Activated CD8-positive, alpha-beta memory T cell treated with anti-CD3 and anti-CD28 coated beads, Interleukin-2, amount 10 ng/mL, durations not matched to agents 7 days and 5 days (primary cell): ENCODE measurements at regions of chr5 and their contacts with region 1.

Region 1: DNA sequence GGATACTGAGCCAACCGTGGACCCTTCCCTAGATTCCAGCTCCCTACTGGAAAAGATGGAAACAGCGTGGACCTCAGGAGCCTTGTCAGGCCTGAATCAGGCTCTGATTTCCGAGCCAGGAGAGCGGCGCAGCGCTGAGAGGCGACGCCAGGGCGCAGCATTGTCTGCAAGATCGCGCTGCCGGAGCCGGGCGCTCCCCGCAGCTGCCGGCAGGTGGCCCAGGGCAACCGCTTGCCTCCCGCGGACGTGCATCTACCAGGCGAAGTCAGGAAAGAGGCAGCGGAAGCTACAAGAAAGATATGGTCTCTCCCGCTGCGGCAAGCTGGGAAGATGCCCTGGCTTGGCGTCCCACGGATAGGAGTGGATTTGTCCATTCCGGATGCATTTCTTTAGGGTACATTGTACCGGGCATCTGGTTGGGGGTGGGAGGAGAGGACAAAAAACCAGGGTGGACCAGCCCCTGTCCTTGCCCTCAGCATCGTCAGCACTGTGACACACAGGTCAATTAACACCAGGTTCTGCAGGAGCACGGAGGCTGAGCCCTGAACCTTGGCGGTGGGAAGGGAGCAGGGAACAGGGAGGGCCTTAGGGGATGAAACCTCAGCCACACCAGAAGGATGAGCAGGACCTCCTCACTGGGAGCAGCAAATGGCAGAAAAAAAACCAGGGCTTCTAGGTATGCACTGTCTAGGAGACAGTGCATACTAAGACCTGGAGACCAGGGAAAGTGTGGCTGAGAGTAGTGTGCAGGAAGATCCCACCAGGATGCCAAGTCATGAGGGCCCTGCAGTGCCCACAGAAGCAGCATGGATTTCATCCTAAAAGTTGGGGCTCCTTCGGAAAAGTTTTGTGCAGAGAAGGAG is 55.9 kb downstream of the SFXN1 start:
- DNase-seq: peak; percentile 86
- ATAC-seq: peak; percentile 100
- H3K4me3 Mint-ChIP-seq: no peak overlapping the region
- H3K27ac Mint-ChIP-seq: peak overlapping the region; percentile 20
- H3K4me1 Mint-ChIP-seq: peaks cover 28% of the 10 kb centered on the region
- H3K27me3 Mint-ChIP-seq: peaks cover 3% of the 10 kb centered on the region

Region 2: GRCh38 chr5:174910245-174910737 is 624.0 kb before region 1 on chr5:
- CTCF ChIA-PET with region 1: no interaction called
- DNase-seq: peak; percentile 59
- ATAC-seq: peak; percentile 78
- H3K4me3 Mint-ChIP-seq: no peak overlapping the region
- H3K27ac Mint-ChIP-seq: no peak overlapping the region
- H3K4me1 Mint-ChIP-seq: no peaks in the 10 kb centered on the region
- H3K27me3 Mint-ChIP-seq: peaks cover 28% of the 10 kb centered on the region

Region 3: GRCh38 chr5:175436359-175436758 is 97.9 kb before region 1 on chr5:
- CTCF ChIA-PET with region 1: no interaction called
- DNase-seq: no peak
- ATAC-seq: no peak
- H3K4me3 Mint-ChIP-seq: no peak overlapping the region
- H3K27ac Mint-ChIP-seq: no peak overlapping the region
- H3K4me1 Mint-ChIP-seq: no peaks in the 10 kb centered on the region
- H3K27me3 Mint-ChIP-seq: peaks cover 52% of the 10 kb centered on the region

Region 4: DNA sequence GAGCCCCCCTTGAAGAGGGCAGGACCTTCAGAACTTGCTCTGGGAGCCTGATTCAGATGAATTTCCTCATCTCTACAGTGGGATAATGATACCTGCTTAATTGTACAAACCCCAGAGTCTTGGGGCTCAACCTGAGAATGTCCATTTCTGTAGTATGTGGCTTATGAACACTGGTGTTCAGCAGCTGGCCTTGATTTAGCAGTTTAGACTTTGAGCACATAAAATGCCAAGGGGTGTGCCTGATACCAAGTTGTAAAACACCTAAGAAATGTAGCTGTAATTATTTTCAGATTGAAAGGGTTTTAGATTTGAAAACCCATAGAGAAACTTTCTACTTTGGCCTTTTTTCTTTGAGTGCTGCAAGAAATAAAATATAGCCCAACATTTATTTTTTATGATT is 11.0 kb before region 1 on chr5:
- CTCF ChIA-PET with region 1: interaction called, 18 read pairs
- DNase-seq: no peak
- ATAC-seq: no peak
- H3K4me3 Mint-ChIP-seq: peak overlapping the region; percentile 39
- H3K27ac Mint-ChIP-seq: peak overlapping the region; percentile 68
- H3K4me1 Mint-ChIP-seq: peaks cover 66% of the 10 kb centered on the region
- H3K27me3 Mint-ChIP-seq: no peaks in the 10 kb centered on the region

Region 5: GRCh38 chr5:175597718-175598117 is 63.4 kb after region 1 on chr5:
- CTCF ChIA-PET with region 1: no interaction called
- DNase-seq: no peak
- ATAC-seq: no peak
- H3K4me3 Mint-ChIP-seq: no peak overlapping the region
- H3K27ac Mint-ChIP-seq: no peak overlapping the region
- H3K4me1 Mint-ChIP-seq: no peaks in the 10 kb centered on the region
- H3K27me3 Mint-ChIP-seq: peaks cover 19% of the 10 kb centered on the region

Region 6: GRCh38 chr5:175616083-175616482 is 81.8 kb after region 1 on chr5:
- CTCF ChIA-PET with region 1: no interaction called
- DNase-seq: no peak
- ATAC-seq: no peak
- H3K4me3 Mint-ChIP-seq: no peak overlapping the region
- H3K27ac Mint-ChIP-seq: no peak overlapping the region
- H3K4me1 Mint-ChIP-seq: no peaks in the 10 kb centered on the region
- H3K27me3 Mint-ChIP-seq: peaks cover 18% of the 10 kb centered on the region

Region 7: GRCh38 chr5:175657593-175658271 is 123.4 kb after region 1 on chr5 and contains the start of gene HRH2:
- CTCF ChIA-PET with region 1: interaction called, 17 read pairs
- DNase-seq: peak; percentile 65
- ATAC-seq: peak; percentile 46
- H3K4me3 Mint-ChIP-seq: peak within 1 kb of the TSS; percentile 78
- H3K27ac Mint-ChIP-seq: peak within 1 kb of the TSS; percentile 77
- H3K4me1 Mint-ChIP-seq: peaks cover 63% of the 10 kb centered on the region
- H3K27me3 Mint-ChIP-seq: peaks cover 31% of the 10 kb centered on the region
- total RNA-seq, gene HRH2: 6.8 to 21.4 TPM

Region 8: DNA sequence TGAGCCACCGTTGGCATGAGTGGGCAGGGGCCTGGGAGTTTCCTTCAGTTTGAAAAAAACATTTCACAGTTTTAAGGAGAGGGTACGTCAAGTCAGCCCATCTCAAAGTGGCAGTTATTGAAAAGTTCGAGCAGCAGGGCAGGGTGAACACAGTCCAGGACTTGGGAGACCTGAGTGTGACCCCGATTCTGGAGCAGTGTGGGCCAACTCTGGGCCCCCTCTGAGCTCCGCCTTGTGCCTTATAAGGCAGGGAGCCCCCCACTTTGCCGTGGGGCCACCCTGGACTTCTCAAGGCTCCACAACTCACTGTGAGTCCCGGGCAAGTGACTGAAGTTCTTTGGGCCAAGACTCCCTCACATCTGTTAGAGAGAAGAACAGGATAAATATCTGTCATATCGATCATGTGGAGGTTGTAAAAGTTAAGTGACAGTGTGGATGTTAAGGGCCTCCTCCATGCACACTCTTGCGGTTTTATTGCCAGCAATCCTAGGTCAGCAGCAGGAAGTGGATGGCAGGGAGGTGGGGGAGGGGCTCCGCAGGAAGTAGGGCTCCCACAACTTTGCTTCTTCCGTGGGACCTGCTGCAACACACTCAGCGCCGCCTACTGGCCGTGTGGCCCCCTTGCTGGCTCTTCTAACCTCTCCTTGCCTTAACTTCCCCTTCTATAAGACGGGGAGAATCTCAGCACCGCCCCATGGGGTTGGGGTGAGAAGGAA is 162.0 kb after region 1 on chr5:
- CTCF ChIA-PET with region 1: interaction called, 74 read pairs
- DNase-seq: peak; percentile 80
- ATAC-seq: peak; percentile 76
- H3K4me3 Mint-ChIP-seq: no peak overlapping the region
- H3K27ac Mint-ChIP-seq: peak overlapping the region; percentile 66
- H3K4me1 Mint-ChIP-seq: peaks cover 14% of the 10 kb centered on the region
- H3K27me3 Mint-ChIP-seq: no peaks in the 10 kb centered on the region

Region 9: GRCh38 chr5:175729829-175730277 is 195.6 kb after region 1 on chr5:
- CTCF ChIA-PET with region 1: interaction called, 44 read pairs
- DNase-seq: peak; percentile 92
- ATAC-seq: peak; percentile 95
- H3K4me3 Mint-ChIP-seq: no peak overlapping the region
- H3K27ac Mint-ChIP-seq: no peak overlapping the region
- H3K4me1 Mint-ChIP-seq: peaks cover 3% of the 10 kb centered on the region
- H3K27me3 Mint-ChIP-seq: peaks cover 13% of the 10 kb centered on the region